ENCODE measurements at regions of chr2 and their contacts with region 1.

Region 1: DNA sequence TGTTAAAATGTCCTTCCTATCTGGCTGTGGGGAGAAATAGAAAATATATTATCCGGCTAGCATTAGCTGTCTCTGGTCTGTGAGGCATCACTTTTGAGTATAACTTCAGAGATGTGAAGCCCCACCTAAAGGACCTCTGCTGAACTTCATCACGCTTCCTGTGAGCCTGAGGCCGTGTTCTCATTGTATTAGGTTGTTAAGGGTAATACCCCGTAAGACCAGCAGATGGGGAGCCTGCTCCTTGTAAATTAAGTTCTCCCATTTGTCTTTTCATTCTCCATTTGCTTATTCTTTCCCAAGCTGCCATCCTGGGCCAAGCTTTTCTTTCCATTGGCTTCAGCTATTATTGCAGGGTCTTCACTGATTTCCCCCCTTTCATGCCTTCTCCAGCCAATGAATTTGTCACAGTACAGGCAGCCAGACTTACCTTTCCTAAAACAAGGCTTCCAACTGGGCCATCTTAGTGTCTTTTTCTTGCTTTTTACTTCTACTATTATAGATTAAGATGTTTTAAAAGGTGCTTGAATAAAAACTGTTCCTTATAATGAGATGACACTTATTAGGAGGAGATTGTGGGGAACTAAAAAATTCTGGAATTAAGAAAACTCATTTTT is 12.4 kb downstream of the NIF3L1 start:
- ATAC-seq: peak; percentile 81 to 96 (median 94)
- H3K4me3 ChIP-seq: no peak overlapping the region
- H3K27ac ChIP-seq: no peak overlapping the region
- H3K4me1 ChIP-seq: peaks cover 0 to 3% of the 10 kb centered on the region in 2 donors

Region 2: GRCh38 chr2:201071479-201072200 is 170.1 kb after region 1 on chr2 and contains the starts of genes HYCC2 and NDUFB3:
- in situ Hi-C with region 1: loop called in 1 of 9 experiments (anchors 25 kb)
- ATAC-seq: peak; percentile 94 to 99 (median 98)
- H3K4me3 ChIP-seq: peak within 1 kb of the TSS; percentile 57 to 95 (median 85)
- H3K27ac ChIP-seq: peak within 1 kb of the TSS; percentile 97
- H3K4me1 ChIP-seq: peaks cover 10 to 25% of the 10 kb centered on the region in 2 donors
- total RNA-seq, gene HYCC2: 7.2 to 20.7 (median 15.6) TPM
- total RNA-seq, gene NDUFB3: 77.6 to 135 (median 101) TPM

Region 3: DNA sequence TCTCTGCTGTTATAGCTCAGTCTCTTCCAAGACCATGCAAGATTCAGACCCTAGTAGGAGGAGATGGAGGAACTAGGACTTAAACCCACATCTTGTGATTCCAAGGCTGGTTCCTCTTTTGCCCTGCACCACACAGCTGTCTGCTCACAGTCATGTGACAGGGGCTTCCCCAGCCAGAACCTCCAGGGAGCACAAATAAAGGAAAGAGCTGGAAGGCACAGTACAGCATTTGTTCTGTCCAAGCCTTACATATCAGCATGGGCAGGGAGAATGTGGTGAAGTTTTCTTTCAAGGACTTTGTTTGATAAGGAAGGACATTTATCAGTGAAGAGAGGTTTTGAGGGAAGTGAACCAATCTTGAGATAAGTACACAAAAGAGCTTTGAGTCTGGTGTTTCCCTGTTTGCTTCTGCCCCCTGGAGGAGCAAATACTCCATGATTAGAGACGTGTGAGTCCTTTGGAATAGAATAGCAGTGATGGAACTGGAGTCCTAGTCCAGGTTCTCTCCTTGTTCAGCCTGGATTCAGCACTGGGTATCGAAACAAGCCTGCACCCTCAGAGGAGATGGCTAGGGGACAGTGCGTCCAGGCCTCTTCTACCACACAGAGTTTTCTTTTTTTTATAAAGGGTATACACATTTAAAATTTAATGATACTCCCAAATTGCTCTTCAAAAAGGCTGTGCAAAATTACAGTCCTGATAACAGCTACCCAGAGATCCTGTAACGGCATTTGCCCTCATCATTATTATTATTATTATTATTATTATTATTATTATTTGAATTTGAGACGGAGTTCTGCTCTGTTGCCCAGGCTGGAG is 256.8 kb after region 1 on chr2:
- in situ Hi-C with region 1: loop called in 2 of 9 experiments (anchors 25 kb)
- ATAC-seq: peak; percentile 65 to 98 (median 92)
- H3K4me3 ChIP-seq: no peak overlapping the region
- H3K27ac ChIP-seq: no peak overlapping the region
- H3K4me1 ChIP-seq: peaks cover 3 to 9% of the 10 kb centered on the region in 2 donors